Adrenal gland (tissue), 19 donors: ENCODE measurements at regions of chr2 and their contacts with region 1.

Region 1: DNA sequence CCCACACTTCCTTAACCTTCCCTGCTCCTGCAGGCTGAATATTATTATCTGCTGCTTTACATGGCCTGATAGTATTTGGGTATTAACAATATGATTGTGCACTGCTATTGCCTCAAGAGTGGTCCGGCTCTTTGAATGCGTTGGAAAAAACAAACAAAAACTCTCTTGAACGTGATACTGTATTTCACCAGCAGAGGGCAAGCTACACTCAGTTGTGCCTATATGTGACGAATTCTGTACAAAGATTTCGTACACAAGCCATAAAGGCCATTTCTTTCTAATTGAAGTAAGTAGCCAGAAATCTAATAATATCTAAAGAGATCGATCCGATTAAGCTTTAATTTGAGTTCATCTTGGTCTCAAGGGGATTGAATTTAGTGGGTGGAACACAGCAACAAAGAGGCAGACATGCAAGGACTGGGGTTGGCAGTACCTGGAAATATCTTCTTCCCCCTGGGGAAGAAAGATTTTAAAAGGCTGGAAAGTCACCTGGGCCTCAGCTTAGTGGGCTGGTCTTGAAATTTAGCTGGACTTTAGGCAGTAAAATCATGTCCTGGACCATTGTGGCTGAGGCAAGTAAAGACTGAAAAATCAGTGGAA is 49.3 kb upstream of the RAB6D start:
- DNase-seq: peak in 5 of 7 donors; percentile 25 to 59 (median 38)
- H3K4me3 ChIP-seq: no peak overlapping the region
- H3K27ac ChIP-seq: no peak overlapping the region
- H3K4me1 ChIP-seq: no peaks in the 10 kb centered on the region
- H3K27me3 ChIP-seq: peaks cover 9% of the 10 kb centered on the region
- CTCF ChIP-seq: peak; percentile 75 to 91 (median 86)
- POLR2A ChIP-seq: no peak

Region 2: DNA sequence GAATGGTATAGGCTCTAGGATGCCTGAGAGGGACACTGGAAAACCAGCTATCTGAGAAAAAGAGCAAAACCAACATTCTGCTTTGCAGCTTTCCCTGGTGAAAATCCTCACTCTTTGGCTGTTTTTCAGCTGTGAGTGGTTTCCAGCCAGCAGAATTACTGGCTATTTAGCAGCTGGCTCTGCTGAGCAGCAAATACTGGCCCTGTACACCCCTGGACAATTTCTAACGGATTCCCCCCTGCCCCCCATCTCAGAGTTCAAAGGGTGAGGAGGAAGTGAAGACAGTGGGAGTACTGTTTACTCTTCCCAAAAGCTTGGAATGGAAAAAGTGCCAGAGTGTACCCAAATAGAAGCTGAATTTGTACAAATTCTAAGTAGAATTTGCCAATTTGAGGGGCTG is 1096.7 kb before region 1 on chr2:
- intact Hi-C with region 1: no loop called
- DNase-seq: no peak
- H3K4me3 ChIP-seq: no peak overlapping the region
- H3K27ac ChIP-seq: no peak overlapping the region
- H3K4me1 ChIP-seq: no peaks in the 10 kb centered on the region
- H3K27me3 ChIP-seq: no peaks in the 10 kb centered on the region
- CTCF ChIP-seq: no peak
- POLR2A ChIP-seq: no peak

Region 3: GRCh38 chr2:131154071-131154531 is 259.1 kb before region 1 on chr2:
- intact Hi-C with region 1: loop called in 1 of 2 experiments (anchors 10 kb)
- DNase-seq: peak; percentile 39 to 76 (median 59)
- H3K4me3 ChIP-seq: no peak overlapping the region
- H3K27ac ChIP-seq: no peak overlapping the region
- H3K4me1 ChIP-seq: no peaks in the 10 kb centered on the region
- H3K27me3 ChIP-seq: no peaks in the 10 kb centered on the region
- CTCF ChIP-seq: peak; percentile 77 to 95 (median 88)
- POLR2A ChIP-seq: no peak

Region 4: GRCh38 chr2:131322209-131322608 is 91.0 kb before region 1 on chr2:
- intact Hi-C with region 1: no loop called
- DNase-seq: no peak
- H3K4me3 ChIP-seq: no peak overlapping the region
- H3K27ac ChIP-seq: no peak overlapping the region
- H3K4me1 ChIP-seq: no peaks in the 10 kb centered on the region
- H3K27me3 ChIP-seq: no peaks in the 10 kb centered on the region
- CTCF ChIP-seq: no peak
- POLR2A ChIP-seq: no peak

Region 5: GRCh38 chr2:131567891-131568290 is 154.6 kb after region 1 on chr2:
- intact Hi-C with region 1: no loop called
- DNase-seq: no peak
- H3K4me3 ChIP-seq: no peak overlapping the region
- H3K27ac ChIP-seq: no peak overlapping the region
- H3K4me1 ChIP-seq: no peaks in the 10 kb centered on the region
- H3K27me3 ChIP-seq: no peaks in the 10 kb centered on the region
- CTCF ChIP-seq: no peak
- POLR2A ChIP-seq: no peak

Region 6: GRCh38 chr2:131673392-131674173 is 260.3 kb after region 1 on chr2:
- intact Hi-C with region 1: loop called in 1 of 2 experiments (anchors 5 kb)
- DNase-seq: peak; percentile 81 to 92 (median 87)
- H3K4me3 ChIP-seq: peak overlapping the region in 1 of 4 donors; percentile 48
- H3K27ac ChIP-seq: no peak overlapping the region
- H3K4me1 ChIP-seq: peaks cover 22 to 30% of the 10 kb centered on the region in 2 donors
- H3K27me3 ChIP-seq: no peaks in the 10 kb centered on the region
- CTCF ChIP-seq: peak; percentile 72 to 94 (median 88)
- POLR2A ChIP-seq: no peak